ENCODE measurements at regions of chr1 and their contacts with region 1.

Region 1: GRCh38 chr1:172638885-172639831 is 19.7 kb upstream of the FASLG start:
- DNase-seq: no peak
- ATAC-seq: no peak; the same call in 2 of the 3 replicates
- H3K4me3 ChIP-seq: no peak overlapping the region
- H3K27ac ChIP-seq: no peak overlapping the region
- H3K4me1 ChIP-seq: peaks cover 0 to 36% of the 10 kb centered on the region in 2 experiments; a peak in 4 of 5 replicates
- H3K27me3 ChIP-seq: no peaks in the 10 kb centered on the region
- CTCF ChIP-seq: no peak
- EP300 ChIP-seq: no peak
- POLR2A ChIP-seq: no peak
- RAD21 ChIP-seq: no peak

Region 2: GRCh38 chr1:172206256-172206655 is 432.9 kb before region 1 on chr1:
- CTCF ChIA-PET with region 1: no interaction called
- POLR2A ChIA-PET with region 1: no interaction called
- in situ Hi-C with region 1: loop called (anchors 10 kb)
- intact Hi-C with region 1: loop called (anchors 5 kb)
- DNase-seq: no peak
- ATAC-seq: no peak
- H3K4me3 ChIP-seq: no peak overlapping the region
- H3K27ac ChIP-seq: no peak overlapping the region
- H3K4me1 ChIP-seq: no peaks in the 10 kb centered on the region
- H3K27me3 ChIP-seq: no peaks in the 10 kb centered on the region
- CTCF ChIP-seq: no peak
- EP300 ChIP-seq: no peak
- POLR2A ChIP-seq: no peak
- RAD21 ChIP-seq: no peak

Region 3: DNA sequence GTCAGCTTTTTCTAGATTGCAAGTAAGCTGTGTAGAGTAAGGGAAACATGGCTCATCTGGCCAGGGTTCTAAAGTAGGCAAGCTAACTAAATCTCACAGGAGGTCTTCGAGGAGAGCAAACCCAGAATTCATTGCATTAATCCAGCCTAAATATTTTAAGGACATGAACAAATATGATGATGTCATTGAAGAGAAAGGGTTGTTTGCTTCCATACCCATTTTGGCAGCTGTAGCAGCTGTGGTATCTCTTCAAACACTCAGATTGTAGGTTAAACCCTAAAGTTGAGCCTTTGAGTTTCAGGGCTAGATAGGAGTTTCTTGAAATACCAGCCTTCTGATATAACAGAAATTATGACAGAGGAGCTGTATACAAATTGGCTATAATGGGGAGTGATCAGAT is 419.2 kb before region 1 on chr1:
- CTCF ChIA-PET with region 1: no interaction called
- POLR2A ChIA-PET with region 1: no interaction called
- in situ Hi-C with region 1: loop called (anchors 10 kb)
- intact Hi-C with region 1: no loop called
- DNase-seq: no peak
- ATAC-seq: no peak
- H3K4me3 ChIP-seq: no peak overlapping the region
- H3K27ac ChIP-seq: no peak overlapping the region
- H3K4me1 ChIP-seq: no peaks in the 10 kb centered on the region
- H3K27me3 ChIP-seq: no peaks in the 10 kb centered on the region
- CTCF ChIP-seq: no peak
- EP300 ChIP-seq: no peak
- POLR2A ChIP-seq: no peak
- RAD21 ChIP-seq: no peak

Region 4: DNA sequence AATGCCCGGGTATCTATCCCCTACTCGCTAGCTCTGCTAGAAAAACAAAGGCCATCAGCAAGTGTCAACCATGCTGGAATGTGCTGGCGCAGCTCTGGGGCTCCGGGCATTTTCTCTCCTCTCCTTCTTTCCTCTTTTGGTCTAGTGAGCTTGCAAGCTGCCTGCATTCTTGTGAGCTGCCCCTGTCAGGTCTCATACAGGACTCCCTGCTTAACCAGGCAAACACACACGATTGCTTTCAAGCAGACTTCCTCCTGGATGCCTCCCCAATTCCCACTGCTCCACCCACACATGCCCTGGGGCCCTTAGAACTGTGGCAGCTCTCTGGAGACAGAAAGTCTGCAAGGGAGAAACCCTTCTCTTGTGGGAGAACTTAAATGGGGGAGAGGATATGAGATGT is 141.9 kb before region 1 on chr1:
- CTCF ChIA-PET with region 1: no interaction called
- POLR2A ChIA-PET with region 1: no interaction called
- in situ Hi-C with region 1: no loop called
- intact Hi-C with region 1: no loop called
- DNase-seq: no peak
- ATAC-seq: no peak; the same call in 2 of the 3 replicates
- H3K4me3 ChIP-seq: no peak overlapping the region
- H3K27ac ChIP-seq: no peak overlapping the region
- H3K4me1 ChIP-seq: peaks cover 0 to 13% of the 10 kb centered on the region in 2 experiments; a peak in 3 of 5 replicates
- H3K27me3 ChIP-seq: no peaks in the 10 kb centered on the region
- CTCF ChIP-seq: no peak
- EP300 ChIP-seq: no peak
- POLR2A ChIP-seq: no peak
- RAD21 ChIP-seq: no peak

Measured in K562 (cell line).